Caco-2 (cell line): ENCODE measurements at regions of chr15 and their contacts with region 1.

Region 1: DNA sequence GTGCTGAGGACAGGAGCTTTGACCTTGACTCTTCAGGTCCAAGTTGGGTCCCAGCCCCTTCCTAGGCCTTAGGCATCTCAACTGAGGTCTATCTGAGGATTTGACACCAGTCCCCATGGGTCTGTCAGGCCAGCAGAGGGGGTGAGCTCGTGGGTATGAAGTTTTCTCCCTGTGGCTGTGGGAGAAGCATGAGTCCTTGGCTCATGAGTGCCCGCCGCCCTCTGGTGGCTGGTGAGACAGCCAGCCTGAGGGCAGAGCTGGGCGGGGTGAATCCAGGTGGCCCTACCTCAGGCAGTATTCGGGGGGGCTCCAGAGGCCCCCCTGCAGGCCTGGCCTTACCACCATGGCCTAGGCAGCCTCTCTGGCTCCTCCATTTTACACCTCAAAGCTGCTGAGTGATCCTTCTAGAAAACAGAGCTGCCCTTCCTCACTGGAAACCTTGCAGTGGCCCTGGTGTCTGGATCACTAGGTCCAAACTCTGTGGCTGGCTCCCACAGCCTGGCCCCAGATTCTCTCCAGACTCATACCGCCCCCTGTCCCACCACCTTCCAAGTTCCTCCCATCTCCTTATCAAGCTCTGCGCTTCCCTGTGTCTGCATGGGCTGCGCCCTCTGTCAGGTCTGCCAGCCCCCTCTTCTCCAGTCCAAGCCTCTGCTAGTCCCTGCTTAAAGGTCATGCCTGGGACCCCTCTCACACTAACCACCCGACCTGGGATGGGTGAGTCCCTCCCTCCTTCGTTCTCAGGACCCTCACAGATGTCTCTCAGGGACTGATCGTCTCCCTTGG is 16.1 kb downstream of the SH2D7 start:
- DNase-seq: peak; percentile 87 to 89
- H3K4me3 ChIP-seq: no peak overlapping the region
- H3K4me3 Mint-ChIP-seq: no peak overlapping the region
- H3K27ac Mint-ChIP-seq: no peak overlapping the region
- H3K4me1 ChIP-seq: no peaks in the 10 kb centered on the region
- H3K4me1 Mint-ChIP-seq: peaks cover 14% of the 10 kb centered on the region
- H3K27me3 ChIP-seq: no peaks in the 10 kb centered on the region
- H3K27me3 Mint-ChIP-seq: no peaks in the 10 kb centered on the region
- CTCF ChIP-seq: peak; percentile 89 to 91

Region 2: GRCh38 chr15:77889009-77889806 is 219.3 kb before region 1 on chr15:
- CTCF ChIA-PET with region 1: no interaction called
- POLR2A ChIA-PET with region 1: no interaction called
- intact Hi-C with region 1: no loop called
- DNase-seq: no peak
- H3K4me3 ChIP-seq: no peak overlapping the region
- H3K4me3 Mint-ChIP-seq: no peak overlapping the region
- H3K27ac Mint-ChIP-seq: no peak overlapping the region
- H3K4me1 ChIP-seq: no peaks in the 10 kb centered on the region
- H3K4me1 Mint-ChIP-seq: no peaks in the 10 kb centered on the region
- H3K27me3 ChIP-seq: no peaks in the 10 kb centered on the region
- H3K27me3 Mint-ChIP-seq: no peaks in the 10 kb centered on the region
- CTCF ChIP-seq: no peak

Region 3: GRCh38 chr15:77959432-77959879 is 149.0 kb before region 1 on chr15:
- CTCF ChIA-PET with region 1: interaction called, 33 read pairs
- POLR2A ChIA-PET with region 1: no interaction called
- intact Hi-C with region 1: loop called (anchors 1 kb)
- DNase-seq: peak; percentile 78 to 87
- H3K4me3 ChIP-seq: no peak overlapping the region
- H3K4me3 Mint-ChIP-seq: peak overlapping the region; percentile 19
- H3K27ac Mint-ChIP-seq: no peak overlapping the region
- H3K4me1 ChIP-seq: no peaks in the 10 kb centered on the region
- H3K4me1 Mint-ChIP-seq: no peaks in the 10 kb centered on the region
- H3K27me3 ChIP-seq: no peaks in the 10 kb centered on the region
- H3K27me3 Mint-ChIP-seq: peaks cover 9% of the 10 kb centered on the region
- CTCF ChIP-seq: peak; percentile 80 to 91

Region 4: DNA sequence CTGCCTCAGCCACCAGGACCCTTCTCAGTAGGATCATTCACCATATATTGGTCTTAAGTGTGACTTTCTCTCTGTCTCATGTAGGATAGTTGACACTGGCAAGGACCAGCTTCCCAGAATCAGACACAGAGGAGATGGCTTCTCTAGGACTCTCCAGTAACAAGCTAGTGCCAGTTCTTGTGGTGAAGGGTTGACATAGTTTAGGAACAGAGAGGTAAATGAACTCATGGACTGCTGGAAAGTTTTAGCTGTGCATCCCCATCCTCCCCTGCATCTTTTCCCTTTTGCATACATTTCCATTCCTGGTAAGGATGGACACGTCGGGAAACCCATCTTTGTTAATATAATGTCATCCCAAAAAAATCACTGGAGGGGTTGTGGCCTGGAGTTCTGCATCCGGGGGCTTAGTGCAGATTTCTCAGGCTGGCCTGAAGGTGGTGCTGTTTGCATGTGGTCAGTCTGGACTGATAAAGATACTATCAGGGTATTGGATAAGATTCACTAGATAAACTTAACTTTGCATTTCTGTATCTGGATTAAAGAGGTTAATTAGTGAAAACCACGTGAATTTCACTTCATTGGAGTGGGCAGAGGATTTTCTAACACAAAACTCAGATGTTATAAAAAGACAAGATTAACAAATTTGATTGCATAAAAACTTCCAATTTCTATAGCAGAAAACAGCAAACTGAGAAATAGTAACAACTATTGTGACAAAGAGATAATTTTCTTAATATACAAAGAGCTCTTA is 141.8 kb before region 1 on chr15:
- CTCF ChIA-PET with region 1: interaction called, 31 read pairs
- POLR2A ChIA-PET with region 1: no interaction called
- intact Hi-C with region 1: loop called (anchors 1 kb)
- DNase-seq: peak; percentile 46 to 67
- H3K4me3 ChIP-seq: no peak overlapping the region
- H3K4me3 Mint-ChIP-seq: no peak overlapping the region
- H3K27ac Mint-ChIP-seq: no peak overlapping the region
- H3K4me1 ChIP-seq: peaks cover 5% of the 10 kb centered on the region; the same call in 1 of the 2 replicates
- H3K4me1 Mint-ChIP-seq: no peaks in the 10 kb centered on the region
- H3K27me3 ChIP-seq: no peaks in the 10 kb centered on the region
- H3K27me3 Mint-ChIP-seq: peaks cover 9% of the 10 kb centered on the region
- CTCF ChIP-seq: peak; percentile 70 to 77

Region 5: GRCh38 chr15:78000091-78000926 is 108.2 kb before region 1 on chr15:
- CTCF ChIA-PET with region 1: interaction called, 12 read pairs
- POLR2A ChIA-PET with region 1: no interaction called
- intact Hi-C with region 1: loop called (anchors 1 kb)
- DNase-seq: peak; percentile 59 to 61
- H3K4me3 ChIP-seq: no peak overlapping the region
- H3K4me3 Mint-ChIP-seq: no peak overlapping the region
- H3K27ac Mint-ChIP-seq: no peak overlapping the region
- H3K4me1 ChIP-seq: no peaks in the 10 kb centered on the region
- H3K4me1 Mint-ChIP-seq: no peaks in the 10 kb centered on the region
- H3K27me3 ChIP-seq: no peaks in the 10 kb centered on the region
- H3K27me3 Mint-ChIP-seq: no peaks in the 10 kb centered on the region
- CTCF ChIP-seq: peak; percentile 28 to 29

Region 6: DNA sequence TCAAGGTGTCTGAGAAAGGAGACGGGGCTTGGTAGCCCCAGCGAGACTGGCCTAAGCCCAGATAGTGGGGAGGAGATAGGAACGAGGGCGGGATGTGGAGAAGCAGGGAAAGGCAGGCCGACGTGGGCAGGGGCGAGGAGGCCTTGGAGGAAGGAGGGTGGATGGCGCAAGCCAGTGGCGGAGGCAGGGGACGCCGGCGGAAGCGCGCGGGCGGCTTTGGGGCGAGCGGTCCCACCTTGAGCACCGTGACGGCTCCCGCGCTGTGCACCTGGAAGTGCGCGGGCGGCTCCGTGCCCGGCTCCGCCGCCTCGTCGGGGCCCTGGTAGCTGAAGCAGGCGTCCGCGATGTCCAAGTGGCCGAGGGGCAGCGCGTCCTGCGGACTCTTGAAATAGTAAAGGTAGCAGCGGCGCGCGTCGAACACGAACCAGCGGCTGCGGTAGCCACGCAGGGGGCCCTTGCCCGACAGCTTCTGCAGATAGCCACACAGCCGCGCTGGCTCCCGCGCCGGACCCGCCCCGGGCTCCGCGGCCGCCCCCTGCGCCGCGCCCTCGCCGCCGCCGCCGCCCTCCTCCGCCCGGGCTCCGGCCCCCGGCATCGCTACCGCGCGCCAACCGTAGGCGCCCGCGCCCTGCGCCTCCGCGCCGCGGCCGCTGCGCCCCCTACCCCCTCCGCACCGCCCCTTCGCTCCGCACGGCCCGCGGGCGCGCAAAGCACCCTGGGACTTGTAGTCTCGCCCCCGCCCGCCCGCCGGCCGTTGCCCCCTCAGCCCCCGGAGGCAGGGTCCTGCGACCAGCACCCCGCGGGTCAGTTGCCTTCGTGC is 31.2 kb before region 1 on chr15 and contains the start of gene TBC1D2B:
- CTCF ChIA-PET with region 1: interaction called, 4 read pairs
- POLR2A ChIA-PET with region 1: no interaction called
- intact Hi-C with region 1: loop called (anchors 1 kb)
- DNase-seq: peak; percentile 57 to 72
- H3K4me3 ChIP-seq: peak within 1 kb of the TSS; percentile 82
- H3K4me3 Mint-ChIP-seq: peak within 1 kb of the TSS; percentile 89
- H3K27ac Mint-ChIP-seq: peak within 1 kb of the TSS; percentile 85
- H3K4me1 ChIP-seq: peaks cover 9% of the 10 kb centered on the region; the same call in 1 of the 2 replicates
- H3K4me1 Mint-ChIP-seq: peaks cover 8% of the 10 kb centered on the region
- H3K27me3 ChIP-seq: no peaks in the 10 kb centered on the region
- H3K27me3 Mint-ChIP-seq: no peaks in the 10 kb centered on the region
- CTCF ChIP-seq: no peak
- total RNA-seq, gene TBC1D2B: 18.3 and 19.1 TPM in 2 replicates

Region 7: DNA sequence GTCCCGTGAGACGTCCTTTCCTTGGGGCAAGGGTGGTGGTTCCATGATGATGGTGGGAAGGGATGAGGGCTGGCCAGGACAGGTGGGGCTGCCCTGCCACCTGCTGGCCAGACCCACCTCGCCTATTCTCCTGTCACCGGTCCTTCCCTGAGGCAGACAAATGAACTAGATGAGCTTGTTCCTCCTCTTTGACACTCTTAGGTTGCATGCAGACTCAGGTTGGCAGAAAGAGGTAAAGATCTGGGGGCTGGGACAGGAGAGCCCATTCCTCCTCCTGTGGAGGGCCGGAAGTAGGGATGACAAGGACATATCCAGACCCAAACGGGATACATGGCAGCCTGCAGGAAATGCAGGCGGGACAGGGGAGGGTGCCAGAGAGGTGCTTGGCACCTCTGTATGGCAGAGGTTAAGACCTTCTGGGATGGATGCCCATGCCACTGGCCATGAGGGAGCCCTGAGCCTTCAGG is 87.3 kb after region 1 on chr15:
- CTCF ChIA-PET with region 1: interaction called, 26 read pairs
- POLR2A ChIA-PET with region 1: no interaction called
- intact Hi-C with region 1: loop called (anchors 1 kb)
- DNase-seq: peak in 1 of 2 experiments; percentile 62
- H3K4me3 ChIP-seq: no peak overlapping the region
- H3K4me3 Mint-ChIP-seq: no peak overlapping the region
- H3K27ac Mint-ChIP-seq: no peak overlapping the region
- H3K4me1 ChIP-seq: no peaks in the 10 kb centered on the region
- H3K4me1 Mint-ChIP-seq: no peaks in the 10 kb centered on the region
- H3K27me3 ChIP-seq: no peaks in the 10 kb centered on the region
- H3K27me3 Mint-ChIP-seq: peaks cover 3% of the 10 kb centered on the region
- CTCF ChIP-seq: peak; percentile 83 to 89

Region 8: DNA sequence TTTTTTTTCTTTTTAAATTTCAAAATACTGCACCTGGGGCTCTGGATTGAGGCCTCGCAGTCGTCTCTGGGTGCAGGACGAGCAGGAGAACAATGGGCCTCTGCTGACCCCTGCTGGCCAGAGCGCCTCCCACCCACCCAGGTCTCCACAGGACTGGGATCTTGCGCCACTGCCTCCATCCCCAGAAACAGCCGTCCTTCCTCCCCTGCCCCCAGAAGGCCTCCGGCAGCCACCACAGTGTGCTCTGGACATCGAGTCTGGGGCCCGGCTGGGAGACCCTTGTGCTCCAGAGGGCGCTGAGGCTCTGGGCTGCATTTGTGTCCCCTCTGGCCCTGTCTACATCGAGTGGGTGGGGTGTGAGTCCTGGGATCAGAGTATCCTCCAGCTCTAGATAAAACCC is 132.5 kb after region 1 on chr15:
- CTCF ChIA-PET with region 1: interaction called, 21 read pairs
- POLR2A ChIA-PET with region 1: no interaction called
- intact Hi-C with region 1: loop called (anchors 1 kb)
- DNase-seq: peak; percentile 80 to 88
- H3K4me3 ChIP-seq: no peak overlapping the region
- H3K4me3 Mint-ChIP-seq: no peak overlapping the region
- H3K27ac Mint-ChIP-seq: no peak overlapping the region
- H3K4me1 ChIP-seq: peaks cover 8% of the 10 kb centered on the region; the same call in 1 of the 2 replicates
- H3K4me1 Mint-ChIP-seq: peaks cover 6% of the 10 kb centered on the region
- H3K27me3 ChIP-seq: no peaks in the 10 kb centered on the region
- H3K27me3 Mint-ChIP-seq: no peaks in the 10 kb centered on the region
- CTCF ChIP-seq: peak; percentile 81 to 88